Posterior vena cava (tissue), 2 donors: ENCODE measurements at regions of chr5 and their contacts with region 1.

Region 1: DNA sequence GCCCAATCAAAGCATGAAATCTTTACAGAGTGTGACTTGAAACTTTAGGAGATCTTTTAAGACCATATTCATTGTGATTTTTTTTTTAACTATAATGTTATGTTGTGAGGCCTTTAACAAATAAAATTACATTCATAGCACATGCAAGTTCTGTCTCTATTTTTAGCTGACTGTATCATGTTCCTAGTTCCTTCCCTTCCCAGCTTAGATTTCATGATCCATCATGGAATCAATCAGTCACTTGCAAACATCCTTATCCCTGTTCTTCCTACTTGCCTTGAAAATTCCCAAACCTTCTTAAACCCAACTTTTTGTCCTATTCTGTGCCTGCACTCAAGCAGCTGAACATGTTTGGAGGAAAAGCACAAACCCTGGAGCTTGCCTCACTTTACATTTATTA is 141.8 kb downstream of the DMXL1 start:
- DNase-seq: no peak

Region 2: DNA sequence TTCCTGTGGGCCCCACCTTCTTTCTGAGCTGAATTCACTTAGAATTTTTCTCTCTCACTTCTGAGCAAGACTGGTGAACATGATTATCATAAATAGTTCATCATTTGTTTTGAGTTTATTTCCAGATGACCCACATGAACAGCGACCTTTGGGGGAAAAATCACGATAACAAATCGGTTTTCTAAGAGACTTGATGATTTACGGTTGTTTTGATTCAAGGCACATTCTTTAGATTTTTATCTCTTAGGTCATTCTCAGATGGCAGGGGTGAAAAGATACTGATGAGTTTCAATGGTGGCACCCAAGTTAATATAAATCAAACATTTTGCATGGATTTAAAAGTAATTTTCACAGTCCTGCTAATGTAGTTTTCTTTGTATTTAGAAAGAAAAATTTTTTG is 46.7 kb before region 1 on chr5:
- intact Hi-C with region 1: no loop called
- DNase-seq: no peak

Region 3: DNA sequence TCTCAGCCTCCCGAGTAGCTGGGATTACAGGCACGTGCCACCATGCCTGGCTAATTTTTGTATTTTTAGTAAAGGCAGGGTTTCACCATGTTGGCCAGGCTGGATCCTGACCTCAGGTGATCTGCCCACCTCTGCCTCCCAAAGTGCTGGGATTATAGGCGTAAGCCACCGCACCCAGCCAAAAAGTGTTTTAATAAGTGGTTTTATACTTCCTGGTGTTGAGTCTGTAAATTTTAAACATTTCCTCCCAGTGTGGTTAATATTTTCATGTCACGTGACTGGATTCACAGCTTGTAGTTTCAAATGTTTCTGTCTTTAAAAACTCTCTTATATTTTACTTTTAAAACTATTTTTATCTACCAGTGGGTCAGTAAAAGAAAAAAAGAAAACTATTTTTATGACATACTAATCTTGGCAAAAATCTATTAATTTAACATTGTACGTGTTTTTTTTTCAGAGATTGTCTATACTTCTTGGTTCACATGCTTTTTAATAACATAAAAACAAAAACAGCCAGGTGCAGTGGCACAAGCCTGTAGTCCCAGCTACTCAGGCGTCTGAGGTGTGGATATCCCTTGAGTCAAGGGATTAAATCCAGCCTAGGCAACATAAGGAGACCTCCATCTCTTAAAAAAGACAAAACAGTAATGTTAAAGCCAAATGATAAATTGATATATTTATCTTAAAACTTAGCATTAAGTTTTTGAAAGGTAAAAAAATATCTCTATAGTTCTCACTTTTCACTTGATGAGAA is 24.7 kb before region 1 on chr5:
- intact Hi-C with region 1: loop called in 1 of 2 experiments (anchors 1 kb)
- DNase-seq: no peak